Right cardiac atrium (tissue), 5 donors: ENCODE measurements at regions of chr20 and their contacts with region 1.

Region 1: DNA sequence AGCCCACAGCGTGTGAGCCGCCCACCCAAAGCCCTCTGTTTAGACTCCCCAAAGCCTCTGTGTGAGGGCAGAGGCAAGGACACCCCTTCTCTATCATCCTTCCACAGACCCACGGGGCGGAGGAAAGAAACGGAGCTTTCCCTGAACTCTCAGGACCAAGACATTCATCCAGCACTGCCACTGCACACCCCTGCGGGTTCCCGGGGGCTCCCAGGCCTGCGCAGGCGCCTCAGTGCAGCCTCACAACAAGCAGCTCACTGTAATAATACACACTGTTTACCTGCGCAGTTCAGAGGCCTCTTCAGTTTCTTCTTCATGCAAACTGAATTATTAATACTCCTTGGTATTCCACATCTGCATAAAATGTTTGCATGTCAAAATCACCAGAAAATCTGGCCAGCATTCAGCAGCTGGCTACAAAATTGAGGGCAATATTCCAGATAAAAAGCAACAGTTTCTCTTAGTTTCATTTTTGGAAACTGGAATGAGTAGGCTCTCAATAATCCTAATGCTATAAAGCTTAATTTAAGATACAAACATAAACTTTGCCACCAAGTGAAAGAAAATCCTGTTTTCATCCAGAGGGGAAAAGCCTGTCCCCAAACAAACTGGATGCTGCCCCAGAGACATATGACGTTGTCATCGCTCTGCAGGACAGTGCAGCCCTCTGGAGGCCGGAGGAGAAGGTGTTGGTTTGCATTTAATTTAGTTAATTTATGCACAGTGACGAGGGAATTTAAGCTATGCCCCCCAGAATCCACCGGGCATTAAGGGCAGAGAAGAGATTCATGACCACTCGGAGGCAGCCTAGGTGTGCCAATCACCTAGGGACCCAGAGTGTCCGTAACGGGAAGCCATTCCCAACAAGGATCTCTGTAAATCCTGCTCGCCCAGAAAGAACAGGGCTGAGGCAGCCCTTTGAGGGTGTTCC is 45.3 kb downstream of the NINL start:
- DNase-seq: peak in 2 of 3 donors; percentile 46 to 70
- ATAC-seq: peak; percentile 79 to 81
- H3K4me3 ChIP-seq: peak overlapping the region; percentile 40
- H3K27ac ChIP-seq: peak overlapping the region; percentile 29
- H3K4me1 ChIP-seq: peaks cover 6% of the 10 kb centered on the region
- H3K27me3 ChIP-seq: no peaks in the 10 kb centered on the region

Region 2: GRCh38 chr20:25361287-25361683 is 178.7 kb before region 1 on chr20:
- intact Hi-C with region 1: no loop called
- DNase-seq: no peak
- ATAC-seq: no peak
- H3K4me3 ChIP-seq: no peak overlapping the region
- H3K27ac ChIP-seq: no peak overlapping the region
- H3K4me1 ChIP-seq: peaks cover 1% of the 10 kb centered on the region
- H3K27me3 ChIP-seq: no peaks in the 10 kb centered on the region

Region 3: DNA sequence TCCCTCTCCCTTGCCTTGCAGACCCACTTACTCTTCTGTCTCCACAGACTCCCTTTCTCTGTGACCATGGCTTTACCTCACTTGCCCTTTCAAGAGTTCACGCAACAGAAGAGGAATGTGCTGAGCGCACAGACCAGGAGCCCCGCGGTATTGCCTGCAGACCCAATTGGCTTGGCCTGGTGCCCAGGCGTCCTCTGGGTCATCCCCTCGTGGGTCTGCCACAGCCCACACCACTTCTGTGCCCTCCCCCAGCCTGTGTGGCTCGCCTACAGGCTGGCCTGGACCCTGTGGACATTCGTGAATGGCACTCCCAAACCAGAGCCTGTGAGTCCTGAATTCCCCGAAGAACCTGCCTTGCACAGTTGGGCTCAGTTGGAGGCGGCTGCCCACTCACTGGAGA is 60.6 kb after region 1 on chr20:
- intact Hi-C with region 1: loop called in 1 of 4 experiments (anchors 10 kb)
- DNase-seq: no peak
- ATAC-seq: no peak
- H3K4me3 ChIP-seq: no peak overlapping the region
- H3K27ac ChIP-seq: no peak overlapping the region
- H3K4me1 ChIP-seq: no peaks in the 10 kb centered on the region
- H3K27me3 ChIP-seq: no peaks in the 10 kb centered on the region

Region 4: GRCh38 chr20:25623736-25624499 is 83.9 kb after region 1 on chr20 and contains the start of gene NANP:
- intact Hi-C with region 1: no loop called
- DNase-seq: peak; percentile 97 to 99 (median 98)
- ATAC-seq: peak; percentile 98
- H3K4me3 ChIP-seq: peak within 1 kb of the TSS; percentile 65
- H3K27ac ChIP-seq: peak within 1 kb of the TSS; percentile 87
- H3K4me1 ChIP-seq: peaks cover 2% of the 10 kb centered on the region
- H3K27me3 ChIP-seq: no peaks in the 10 kb centered on the region
- total RNA-seq, gene NANP: 3.5 to 5.1 (median 4.2) TPM